ENCODE measurements at regions of chr15 and their contacts with region 1.

Region 1: DNA sequence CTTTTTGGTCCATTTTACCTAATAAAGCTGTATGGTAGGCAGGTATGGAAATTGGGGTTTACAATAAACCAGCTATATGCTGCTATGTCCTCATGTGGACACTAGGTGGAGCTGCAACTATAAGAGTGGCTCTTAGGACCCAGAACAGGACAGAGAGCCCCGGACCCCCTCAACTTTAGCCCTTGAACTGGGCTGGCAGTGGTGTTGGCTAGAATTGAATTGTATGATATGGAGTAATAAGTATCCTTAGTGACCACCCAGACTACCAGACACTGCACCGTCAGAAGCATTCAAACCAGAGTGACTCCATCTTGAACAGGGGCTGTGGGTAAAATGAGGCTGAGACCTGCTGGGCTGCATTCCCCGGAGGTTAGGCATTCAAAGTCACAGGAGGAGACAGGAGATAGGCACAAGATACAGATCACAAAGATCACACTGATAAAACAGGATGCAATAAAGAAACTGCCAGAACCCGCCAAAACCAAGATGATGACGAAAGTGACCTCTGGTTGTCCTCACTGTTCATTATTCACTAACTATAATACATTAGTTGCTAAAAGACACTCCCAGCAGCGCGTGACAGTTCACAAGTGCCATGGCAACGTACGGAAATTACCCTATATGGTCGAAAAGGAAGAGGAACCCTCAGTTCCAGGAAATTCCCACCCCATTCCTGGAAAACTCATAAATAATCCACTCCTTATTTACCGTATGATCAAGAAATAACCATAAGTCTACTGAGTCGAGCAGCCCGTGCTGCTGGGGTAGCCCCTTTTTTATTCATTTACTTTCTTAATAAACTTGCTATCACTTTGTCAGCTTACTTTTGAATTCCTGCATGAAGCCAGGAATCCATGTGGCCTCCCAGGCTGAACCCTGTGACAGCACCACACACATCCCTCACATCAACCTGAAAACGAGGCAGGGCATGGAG is 68.7 kb upstream of the BLM start:
- DNase-seq: peak; percentile 75
- CTCF ChIP-seq: peak; percentile 79

Region 2: DNA sequence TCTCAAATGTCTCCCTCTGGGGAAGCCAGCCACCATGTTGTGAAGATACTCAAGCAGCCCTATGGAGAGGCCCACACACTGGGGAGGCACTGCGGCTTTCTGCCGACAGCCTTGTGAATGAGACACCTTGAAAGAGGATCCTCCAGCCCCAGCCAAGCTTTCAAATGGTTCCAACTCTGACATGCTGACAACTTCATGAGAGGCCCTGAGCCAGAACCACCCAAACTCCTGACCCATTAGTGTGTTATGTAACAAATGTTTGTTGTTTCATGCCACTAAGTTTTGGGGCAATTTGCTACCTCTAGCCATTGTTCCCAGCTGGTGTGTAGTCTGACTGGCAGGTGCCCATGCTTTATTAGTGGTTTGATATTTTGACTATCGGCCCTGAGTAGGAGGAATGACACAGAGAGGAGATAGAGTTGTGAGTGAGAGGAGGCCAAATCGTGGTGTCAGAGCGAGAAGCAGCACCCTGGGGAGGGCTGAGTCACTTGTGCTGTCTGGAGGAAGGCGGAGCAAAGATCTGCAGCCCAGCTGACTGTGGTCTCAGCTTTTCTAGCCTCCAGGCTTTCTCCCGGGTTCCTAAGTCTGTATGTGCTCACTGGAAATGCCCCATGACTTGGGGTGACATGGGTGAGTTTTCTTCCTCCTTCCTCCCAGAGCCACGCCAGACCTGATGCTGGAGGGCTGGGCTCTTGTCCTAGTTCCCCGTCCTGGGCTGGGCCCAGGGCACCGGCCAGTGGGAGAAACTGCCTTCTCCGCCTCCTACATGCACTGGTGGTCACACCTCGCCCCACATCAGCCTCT is 12.0 kb after region 1 on chr15:
- CTCF ChIA-PET with region 1: interaction called, 31 read pairs
- POLR2A ChIA-PET with region 1: interaction called, 3 read pairs
- DNase-seq: peak; percentile 79
- CTCF ChIP-seq: no peak

Region 3: GRCh38 chr15:90665288-90666134 is 17.1 kb after region 1 on chr15:
- CTCF ChIA-PET with region 1: interaction called, 31 read pairs
- POLR2A ChIA-PET with region 1: interaction called, 3 read pairs
- DNase-seq: peak; percentile 80
- CTCF ChIP-seq: no peak

Region 4: DNA sequence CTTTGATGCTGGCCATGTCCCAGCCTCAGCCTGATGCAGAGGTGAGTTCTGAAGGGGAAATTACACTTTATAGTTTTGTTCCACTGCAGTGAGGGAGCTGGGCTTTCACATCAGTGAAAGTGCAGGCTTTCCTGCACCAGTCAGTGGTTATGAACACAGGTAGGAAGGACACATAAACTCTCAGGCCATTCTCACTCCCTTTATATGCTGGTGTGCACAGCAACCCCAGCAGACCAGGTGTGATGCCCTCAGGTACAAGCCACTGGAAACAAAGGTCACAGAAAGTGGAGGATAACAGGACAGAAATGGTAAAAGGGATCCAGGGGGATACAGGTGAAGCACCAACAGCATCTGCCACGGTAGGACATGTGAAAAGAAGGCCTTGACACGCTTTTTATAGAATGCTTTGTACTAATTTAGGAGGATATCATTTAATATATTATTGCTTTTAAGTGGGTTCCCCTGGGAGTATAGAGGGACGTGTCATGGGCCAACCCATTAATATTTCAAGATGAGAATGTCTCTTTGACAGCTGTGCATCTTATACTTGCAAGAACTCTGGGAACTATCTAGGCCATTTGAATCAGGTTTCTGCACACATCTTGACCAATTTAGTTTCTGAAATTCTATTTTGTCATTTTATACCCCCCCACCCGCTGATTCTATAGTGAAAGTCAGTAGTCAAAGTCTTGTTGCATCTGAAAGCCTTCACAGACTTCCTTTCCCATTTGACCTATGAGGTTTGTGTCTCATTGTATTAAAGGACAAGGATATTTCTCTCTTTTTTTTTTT is 43.8 kb after region 1 on chr15:
- CTCF ChIA-PET with region 1: interaction called, 18 read pairs
- POLR2A ChIA-PET with region 1: no interaction called
- DNase-seq: peak; percentile 41
- CTCF ChIP-seq: no peak

Measured in GM10248 (cell line).